ENCODE measurements at regions of chr1 and their contacts with region 1.

Region 1: DNA sequence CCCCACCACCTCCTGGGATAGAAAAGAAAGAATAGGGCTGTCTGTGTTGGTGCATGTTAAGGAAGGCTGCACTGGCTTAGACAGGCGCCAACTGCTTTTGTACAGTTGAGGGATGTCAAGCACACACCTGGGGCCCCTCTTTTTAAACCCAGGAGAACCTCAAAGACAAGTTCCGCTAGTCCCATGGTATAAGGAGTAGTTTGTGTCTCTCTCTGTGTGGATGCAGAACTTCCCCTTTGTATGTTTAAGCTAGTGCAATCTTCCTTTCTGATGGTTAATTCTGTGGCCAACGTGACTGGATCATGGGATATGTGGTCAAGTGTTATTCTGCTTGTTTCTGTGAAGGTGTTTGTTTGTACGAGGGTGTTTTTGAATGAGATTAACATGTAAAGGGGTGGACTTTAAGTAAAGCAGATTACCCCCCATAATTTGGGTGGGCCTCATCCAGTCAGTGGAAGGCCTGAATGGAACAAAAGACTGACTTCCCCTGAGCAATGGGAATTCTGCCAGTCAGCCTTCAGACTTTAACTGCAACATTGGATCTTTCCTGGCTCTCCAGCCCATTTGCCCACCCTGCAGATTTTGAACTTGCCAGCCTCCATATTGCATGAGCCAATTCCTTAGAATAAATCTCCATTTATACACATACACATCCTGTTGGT is 9.5 kb upstream of the DUSP10 start:
- DNase-seq: no peak
- H3K4me3 ChIP-seq: no peak overlapping the region
- H3K27ac ChIP-seq: no peak overlapping the region
- H3K4me1 ChIP-seq: no peaks in the 10 kb centered on the region
- H3K27me3 ChIP-seq: peaks cover 0 to 2% of the 10 kb centered on the region in 2 donors
- CTCF ChIP-seq: no peak

Region 2: GRCh38 chr1:221620437-221621384 is 130.6 kb before region 1 on chr1:
- intact Hi-C with region 1: no loop called
- DNase-seq: no peak
- H3K4me3 ChIP-seq: no peak overlapping the region
- H3K27ac ChIP-seq: no peak overlapping the region
- H3K4me1 ChIP-seq: no peaks in the 10 kb centered on the region
- H3K27me3 ChIP-seq: no peaks in the 10 kb centered on the region
- CTCF ChIP-seq: no peak

Region 3: DNA sequence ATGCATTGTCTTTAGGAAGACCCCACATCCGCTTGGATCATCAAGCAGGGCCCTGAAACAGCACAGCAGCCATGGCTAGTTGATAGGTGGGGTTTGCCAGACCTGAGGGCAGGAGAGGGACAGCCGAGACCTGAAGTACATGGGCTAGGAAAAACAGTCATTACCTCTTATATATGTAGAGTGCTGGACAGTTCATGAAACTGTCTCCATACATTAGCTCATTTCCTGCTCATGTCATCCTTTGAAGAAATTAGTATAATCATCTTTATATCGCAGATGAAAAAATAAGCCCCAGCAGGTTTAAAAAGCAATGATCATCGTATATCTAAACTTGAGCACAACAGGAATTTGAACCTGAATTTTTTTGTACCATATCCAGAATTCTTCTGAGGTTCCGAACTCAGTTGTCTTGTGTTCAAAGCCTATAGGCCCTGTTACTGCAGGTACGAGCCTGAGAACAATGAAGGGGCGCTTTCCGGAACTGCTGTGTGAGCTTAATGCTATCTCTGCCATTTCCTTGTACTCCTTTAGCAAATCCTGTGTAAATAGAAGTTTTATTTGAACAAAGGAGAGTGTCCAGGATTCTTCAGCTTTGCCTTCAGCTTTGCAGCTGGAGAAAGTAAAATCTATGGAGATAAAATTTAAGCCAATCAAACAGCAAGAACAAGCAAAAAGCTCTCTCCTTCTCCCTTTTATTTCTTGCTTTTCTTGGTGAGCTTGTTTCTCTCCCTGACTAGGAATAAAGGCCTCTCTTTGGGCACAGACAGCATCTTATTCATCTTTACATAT is 22.9 kb after region 1 on chr1:
- intact Hi-C with region 1: loop called (anchors 2 kb)
- DNase-seq: no peak
- H3K4me3 ChIP-seq: no peak overlapping the region
- H3K27ac ChIP-seq: no peak overlapping the region
- H3K4me1 ChIP-seq: no peaks in the 10 kb centered on the region
- H3K27me3 ChIP-seq: no peaks in the 10 kb centered on the region
- CTCF ChIP-seq: no peak

Region 4: DNA sequence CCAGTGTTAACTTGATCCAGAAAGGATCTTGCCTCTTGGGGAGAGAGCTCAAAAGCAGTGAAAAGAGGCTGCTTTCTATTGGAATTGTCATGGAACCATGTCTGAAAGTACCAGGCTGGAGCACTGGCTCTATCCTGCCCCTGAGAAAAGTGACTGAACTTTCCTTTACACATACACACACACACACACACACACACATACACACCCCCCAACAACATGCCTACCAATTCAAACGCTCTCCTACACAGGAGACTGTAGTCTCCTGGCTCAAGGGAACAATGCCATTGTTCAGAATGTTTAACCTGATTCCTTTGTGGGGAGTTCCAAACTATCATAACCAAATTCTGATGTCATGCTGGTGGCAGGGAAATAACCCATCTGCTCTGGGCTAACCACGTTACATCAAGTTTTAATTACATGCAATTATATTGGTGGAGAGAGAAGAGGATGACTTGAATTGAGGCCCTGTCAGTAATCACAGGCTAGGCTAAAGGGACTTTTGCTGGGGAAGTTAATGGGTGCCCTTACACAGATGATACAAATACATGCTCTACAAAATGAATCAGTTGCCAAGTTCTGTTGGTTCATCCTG is 42.8 kb after region 1 on chr1:
- intact Hi-C with region 1: no loop called
- DNase-seq: no peak
- H3K4me3 ChIP-seq: no peak overlapping the region
- H3K27ac ChIP-seq: no peak overlapping the region
- H3K4me1 ChIP-seq: no peaks in the 10 kb centered on the region
- H3K27me3 ChIP-seq: no peaks in the 10 kb centered on the region
- CTCF ChIP-seq: no peak

Region 5: GRCh38 chr1:222073307-222073995 is 322.1 kb after region 1 on chr1:
- intact Hi-C with region 1: no loop called
- DNase-seq: no peak
- H3K4me3 ChIP-seq: no peak overlapping the region
- H3K27ac ChIP-seq: no peak overlapping the region
- H3K4me1 ChIP-seq: peaks cover 0 to 3% (median 0%) of the 10 kb centered on the region in 4 donors
- H3K27me3 ChIP-seq: no peaks in the 10 kb centered on the region
- CTCF ChIP-seq: no peak